ENCODE measurements at regions of chr1 and their contacts with region 1.

Region 1: GRCh38 chr1:193019442-193020026 is 39.6 kb downstream of the UCHL5 start:
- DNase-seq: peak; percentile 58
- ATAC-seq: peak; percentile 64
- H3K4me3 ChIP-seq: no peak overlapping the region
- H3K4me3 Mint-ChIP-seq: no peak overlapping the region
- H3K27ac ChIP-seq: no peak overlapping the region
- H3K27ac Mint-ChIP-seq: no peak overlapping the region
- H3K4me1 ChIP-seq: no peaks in the 10 kb centered on the region
- H3K4me1 Mint-ChIP-seq: no peaks in the 10 kb centered on the region
- H3K27me3 ChIP-seq: no peaks in the 10 kb centered on the region
- H3K27me3 Mint-ChIP-seq: no peaks in the 10 kb centered on the region
- CTCF ChIP-seq: peak; percentile 71

Region 2: GRCh38 chr1:192801451-192801850 is 218.1 kb before region 1 on chr1:
- CTCF ChIA-PET with region 1: interaction called, 201 read pairs
- POLR2A ChIA-PET with region 1: no interaction called
- intact Hi-C with region 1: loop called (anchors 1 kb)
- DNase-seq: no peak
- ATAC-seq: no peak
- H3K4me3 ChIP-seq: no peak overlapping the region
- H3K4me3 Mint-ChIP-seq: no peak overlapping the region
- H3K27ac ChIP-seq: no peak overlapping the region
- H3K27ac Mint-ChIP-seq: no peak overlapping the region
- H3K4me1 ChIP-seq: no peaks in the 10 kb centered on the region
- H3K4me1 Mint-ChIP-seq: peaks cover 5% of the 10 kb centered on the region
- H3K27me3 ChIP-seq: no peaks in the 10 kb centered on the region
- H3K27me3 Mint-ChIP-seq: no peaks in the 10 kb centered on the region
- CTCF ChIP-seq: no peak

Region 3: GRCh38 chr1:192941722-192942411 is 77.7 kb before region 1 on chr1:
- CTCF ChIA-PET with region 1: no interaction called
- POLR2A ChIA-PET with region 1: no interaction called
- intact Hi-C with region 1: loop called (anchors 10 kb)
- DNase-seq: peak; percentile 33
- ATAC-seq: no peak
- H3K4me3 ChIP-seq: no peak overlapping the region
- H3K4me3 Mint-ChIP-seq: no peak overlapping the region
- H3K27ac ChIP-seq: no peak overlapping the region
- H3K27ac Mint-ChIP-seq: peak overlapping the region; percentile 74
- H3K4me1 ChIP-seq: peaks cover 0 to 11% of the 10 kb centered on the region in 2 donors
- H3K4me1 Mint-ChIP-seq: peaks cover 12% of the 10 kb centered on the region
- H3K27me3 ChIP-seq: no peaks in the 10 kb centered on the region
- H3K27me3 Mint-ChIP-seq: no peaks in the 10 kb centered on the region
- CTCF ChIP-seq: no peak

Region 4: GRCh38 chr1:193031438-193031837 is 11.9 kb after region 1 on chr1:
- CTCF ChIA-PET with region 1: interaction called, 16 read pairs
- POLR2A ChIA-PET with region 1: no interaction called
- intact Hi-C with region 1: no loop called
- DNase-seq: peak; percentile 7
- ATAC-seq: peak; percentile 47
- H3K4me3 ChIP-seq: no peak overlapping the region
- H3K4me3 Mint-ChIP-seq: no peak overlapping the region
- H3K27ac ChIP-seq: no peak overlapping the region
- H3K27ac Mint-ChIP-seq: no peak overlapping the region
- H3K4me1 ChIP-seq: no peaks in the 10 kb centered on the region
- H3K4me1 Mint-ChIP-seq: peaks cover 2% of the 10 kb centered on the region
- H3K27me3 ChIP-seq: no peaks in the 10 kb centered on the region
- H3K27me3 Mint-ChIP-seq: no peaks in the 10 kb centered on the region
- CTCF ChIP-seq: peak; percentile 46

Region 5: GRCh38 chr1:193059268-193060225 is 40.0 kb after region 1 on chr1 and contains the starts of genes RO60 and UCHL5:
- CTCF ChIA-PET with region 1: interaction called, 10 read pairs
- POLR2A ChIA-PET with region 1: no interaction called
- intact Hi-C with region 1: no loop called
- DNase-seq: peak; percentile 96
- ATAC-seq: peak; percentile 95
- H3K4me3 ChIP-seq: peak within 1 kb of the TSS; percentile 62 to 99 (median 91)
- H3K4me3 Mint-ChIP-seq: peak within 1 kb of the TSS; percentile 98
- H3K27ac ChIP-seq: peak within 1 kb of the TSS; percentile 89 to 94
- H3K27ac Mint-ChIP-seq: peak within 1 kb of the TSS; percentile 99
- H3K4me1 ChIP-seq: peaks cover 21 to 25% of the 10 kb centered on the region in 2 donors
- H3K4me1 Mint-ChIP-seq: peaks cover 51% of the 10 kb centered on the region
- H3K27me3 ChIP-seq: no peaks in the 10 kb centered on the region
- H3K27me3 Mint-ChIP-seq: no peaks in the 10 kb centered on the region
- CTCF ChIP-seq: no peak
- total RNA-seq, gene RO60: 66.4 and 78.2 TPM in 2 replicates
- total RNA-seq, gene UCHL5: 31.5 and 32.9 TPM in 2 replicates

Measured in B cell (primary cell).